HepG2 (cell line): ENCODE measurements at regions of chr7 and their contacts with region 1.

Region 1: DNA sequence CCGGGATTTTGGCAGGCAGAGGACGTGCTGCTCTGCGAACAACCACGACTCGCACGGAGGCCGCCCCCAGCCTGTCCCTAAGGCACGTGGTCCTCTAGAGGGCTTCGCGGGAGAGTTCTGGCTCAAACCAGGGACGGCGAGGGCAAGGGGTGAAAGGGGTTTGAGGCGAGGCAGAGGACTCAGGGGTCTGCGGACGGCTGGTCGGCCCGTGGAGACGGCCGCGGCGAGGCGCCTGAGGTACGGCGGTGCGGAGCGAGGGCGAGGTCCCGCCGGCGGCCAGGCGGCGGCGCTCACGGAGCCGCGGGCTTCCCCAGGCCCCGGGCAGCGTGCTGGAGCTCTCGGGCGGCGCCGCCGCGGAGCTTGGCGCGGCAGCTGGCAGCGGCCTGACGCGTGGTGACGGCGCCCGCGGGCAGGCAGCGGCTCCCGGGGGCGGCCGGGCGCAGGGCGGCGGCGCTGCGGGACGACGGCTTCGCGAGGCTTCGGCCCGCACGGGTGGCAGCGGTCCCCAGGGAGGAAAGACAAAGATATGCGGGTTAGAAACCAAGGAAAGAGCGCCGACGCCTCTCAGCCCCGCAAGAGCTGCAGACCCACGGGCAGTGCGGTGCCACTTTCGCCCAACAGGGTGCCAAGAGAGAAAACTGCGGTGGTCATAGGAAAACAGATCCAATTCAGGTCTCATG is 44.8 kb downstream of the ZNF800 start:
- DNase-seq: peak; percentile 28
- ATAC-seq: peak; percentile 99
- H3K4me3 ChIP-seq: peak overlapping the region; percentile 53 to 61 (median 56)
- H3K27ac ChIP-seq: no peak overlapping the region
- H3K4me1 ChIP-seq: peaks cover 6% of the 10 kb centered on the region; the same call in 1 of the 2 replicates
- H3K27me3 ChIP-seq: peaks cover 0 to 5% of the 10 kb centered on the region in 2 experiments; a peak in 2 of 5 replicates
- CTCF ChIP-seq: peak; percentile 66
- EP300 ChIP-seq: no peak
- POLR2A ChIP-seq: no peak
- RAD21 ChIP-seq: peak; percentile 84

Region 2: DNA sequence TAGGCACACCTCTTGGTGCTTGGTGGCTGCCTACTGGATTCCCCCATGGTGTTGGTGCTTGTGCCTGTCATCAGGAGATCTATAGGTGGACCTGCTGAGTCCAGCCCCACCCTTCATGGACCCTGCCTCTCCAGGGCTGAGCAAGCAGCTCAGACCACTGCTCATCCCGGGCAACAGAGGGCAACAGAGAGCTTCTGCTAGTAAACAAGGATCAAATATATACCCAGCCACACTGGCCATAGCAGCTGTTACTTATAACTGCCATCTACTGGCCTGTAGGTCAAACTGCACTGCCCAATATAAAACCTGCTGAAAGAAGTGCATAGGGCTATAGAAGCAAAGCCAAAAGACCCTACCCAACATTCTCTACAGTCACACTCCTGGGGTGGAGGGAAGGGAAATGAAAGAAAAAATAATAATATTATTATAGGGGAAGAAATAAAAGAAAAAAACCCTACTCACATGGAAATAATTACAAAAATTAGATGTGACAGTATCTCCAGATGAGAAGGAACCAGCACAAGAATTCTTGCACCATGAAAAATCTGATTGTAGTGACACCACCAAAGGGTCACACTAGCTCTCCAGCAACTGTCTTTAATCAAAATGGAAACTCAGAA is 99.7 kb after region 1 on chr7:
- CTCF ChIA-PET with region 1: interaction called, 6 read pairs
- POLR2A ChIA-PET with region 1: no interaction called
- in situ Hi-C with region 1: no loop called
- intact Hi-C with region 1: loop called (anchors 5 kb)
- DNase-seq: peak; percentile 64
- ATAC-seq: peak; percentile 98
- H3K4me3 ChIP-seq: no peak overlapping the region
- H3K27ac ChIP-seq: no peak overlapping the region
- H3K4me1 ChIP-seq: no peaks in the 10 kb centered on the region
- H3K27me3 ChIP-seq: no peaks in the 10 kb centered on the region
- CTCF ChIP-seq: peak; percentile 47
- EP300 ChIP-seq: no peak
- POLR2A ChIP-seq: no peak
- RAD21 ChIP-seq: no peak

Region 3: DNA sequence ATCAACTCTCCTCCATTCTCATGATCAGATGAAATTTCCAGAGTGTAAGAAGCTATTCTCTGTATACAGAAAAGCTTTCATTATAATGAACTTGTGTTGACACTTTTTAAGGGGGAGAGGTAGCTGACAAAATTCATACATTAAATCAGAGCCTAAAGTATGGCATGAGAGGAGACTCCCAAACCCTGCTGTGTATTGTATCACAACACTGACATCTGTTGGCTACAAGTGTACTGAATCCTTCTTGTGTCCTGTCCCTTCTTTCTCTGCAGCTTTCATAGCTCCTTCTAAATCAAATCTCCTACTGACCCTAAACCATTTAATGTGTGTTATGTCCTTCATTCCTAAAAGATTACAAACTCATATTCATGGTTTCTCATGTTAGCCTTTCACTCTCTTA is 166.8 kb after region 1 on chr7:
- CTCF ChIA-PET with region 1: no interaction called
- POLR2A ChIA-PET with region 1: no interaction called
- in situ Hi-C with region 1: no loop called
- intact Hi-C with region 1: loop called (anchors 5 kb)
- DNase-seq: peak; percentile 23
- ATAC-seq: peak; percentile 84
- H3K4me3 ChIP-seq: no peak overlapping the region
- H3K27ac ChIP-seq: no peak overlapping the region
- H3K4me1 ChIP-seq: no peaks in the 10 kb centered on the region
- H3K27me3 ChIP-seq: no peaks in the 10 kb centered on the region
- CTCF ChIP-seq: peak; percentile 63
- EP300 ChIP-seq: no peak
- POLR2A ChIP-seq: no peak
- RAD21 ChIP-seq: 0 out of 2 replicates have a peak, but pooled peaks have one; percentile 17

Region 4: GRCh38 chr7:127629268-127629854 is 281.7 kb after region 1 on chr7:
- CTCF ChIA-PET with region 1: no interaction called
- POLR2A ChIA-PET with region 1: no interaction called
- in situ Hi-C with region 1: no loop called
- intact Hi-C with region 1: loop called (anchors 2 kb)
- DNase-seq: peak; percentile 33
- ATAC-seq: peak; percentile 98
- H3K4me3 ChIP-seq: peak overlapping the region in 1 of 3 experiments; percentile 26; a peak in 1 of 6 replicates
- H3K27ac ChIP-seq: no peak overlapping the region
- H3K4me1 ChIP-seq: no peaks in the 10 kb centered on the region
- H3K27me3 ChIP-seq: no peaks in the 10 kb centered on the region; a peak in 1 of 5 replicates
- CTCF ChIP-seq: peak; percentile 88
- EP300 ChIP-seq: no peak
- POLR2A ChIP-seq: no peak
- RAD21 ChIP-seq: peak; percentile 52